Posterior cingulate gyrus (tissue), 11 donors: ENCODE measurements at regions of chr18 and their contacts with region 1.

Region 1: GRCh38 chr18:21509062-21509461 is 91.4 kb downstream of the ESCO1 start:
- DNase-seq: no peak

Region 2: GRCh38 chr18:21557607-21558253 is 48.7 kb after region 1 on chr18:
- intact Hi-C with region 1: loop called (anchors 10 kb)
- DNase-seq: no peak

Region 3: DNA sequence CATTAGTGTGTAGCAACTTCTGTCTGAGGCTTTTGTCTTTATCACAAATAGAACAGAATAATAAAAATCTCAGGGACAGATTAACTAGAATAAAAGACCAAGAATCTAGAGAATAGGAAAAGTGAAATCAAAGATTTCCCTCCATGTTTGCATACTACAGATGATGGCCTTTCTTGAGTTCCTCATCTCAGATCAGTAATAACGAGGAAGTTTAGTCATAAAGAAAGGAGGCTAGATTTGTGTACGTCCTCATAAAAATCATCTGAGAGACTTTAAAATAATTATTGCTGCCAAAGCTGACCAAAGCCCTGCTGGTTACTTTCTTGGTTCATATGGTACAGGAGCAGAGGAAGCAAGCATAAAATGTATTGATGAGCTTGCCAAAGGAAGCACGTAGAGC is 348.8 kb after region 1 on chr18:
- intact Hi-C with region 1: no loop called
- DNase-seq: no peak